Heart right ventricle (tissue), 16 donors: ENCODE measurements at regions of chr20 and their contacts with region 1.

Region 1: DNA sequence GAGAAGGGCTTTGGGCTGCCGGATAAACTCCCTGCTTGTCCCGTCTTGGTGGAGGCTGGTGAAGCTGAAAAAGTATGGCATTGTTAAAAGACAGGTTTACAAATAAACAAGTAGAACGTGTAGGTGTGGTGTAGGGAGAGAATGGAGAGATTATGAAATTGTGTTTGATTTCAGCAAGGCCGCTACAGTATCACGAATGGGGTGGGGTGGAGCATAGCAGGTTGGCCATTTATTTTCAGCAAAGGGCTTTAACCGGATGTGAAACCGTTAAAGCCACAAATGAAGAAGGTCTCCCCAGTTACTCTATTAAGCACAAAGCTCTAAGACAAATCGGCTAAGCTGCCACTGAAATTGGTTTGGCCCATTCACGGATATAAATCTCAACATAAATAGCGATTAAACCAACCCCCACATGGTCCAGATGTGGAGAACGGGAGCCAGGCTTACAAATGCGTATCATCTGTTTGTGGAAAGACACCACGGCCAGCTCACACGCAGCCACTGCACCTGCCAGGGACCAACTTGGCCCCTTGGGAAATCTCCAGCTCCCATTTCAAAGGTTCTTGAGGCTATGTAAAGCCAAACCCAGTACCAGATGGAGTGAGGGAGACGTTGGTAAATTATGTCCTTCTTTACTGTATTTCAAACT is 94.0 kb downstream of the ZMYND8 start:
- DNase-seq: no peak
- ATAC-seq: no peak
- H3K4me3 ChIP-seq: no peak overlapping the region
- H3K27ac ChIP-seq: peak overlapping the region in 5 of 10 donors; percentile 41 to 75 (median 66)
- H3K4me1 ChIP-seq: peaks cover 8 to 48% (median 31%) of the 10 kb centered on the region in 9 donors
- H3K27me3 ChIP-seq: no peaks in the 10 kb centered on the region
- CTCF ChIP-seq: no peak

Region 2: GRCh38 chr20:47205577-47206498 is 56.7 kb before region 1 on chr20:
- intact Hi-C with region 1: loop called in 3 of 10 experiments (anchors 5 kb)
- DNase-seq: peak; percentile 38 to 76
- ATAC-seq: peak; percentile 61 to 86 (median 70)
- H3K4me3 ChIP-seq: no peak overlapping the region
- H3K27ac ChIP-seq: no peak overlapping the region
- H3K4me1 ChIP-seq: peaks cover 0 to 16% (median 0%) of the 10 kb centered on the region in 9 donors
- H3K27me3 ChIP-seq: no peaks in the 10 kb centered on the region
- CTCF ChIP-seq: peak; percentile 31 to 83 (median 67)

Region 3: DNA sequence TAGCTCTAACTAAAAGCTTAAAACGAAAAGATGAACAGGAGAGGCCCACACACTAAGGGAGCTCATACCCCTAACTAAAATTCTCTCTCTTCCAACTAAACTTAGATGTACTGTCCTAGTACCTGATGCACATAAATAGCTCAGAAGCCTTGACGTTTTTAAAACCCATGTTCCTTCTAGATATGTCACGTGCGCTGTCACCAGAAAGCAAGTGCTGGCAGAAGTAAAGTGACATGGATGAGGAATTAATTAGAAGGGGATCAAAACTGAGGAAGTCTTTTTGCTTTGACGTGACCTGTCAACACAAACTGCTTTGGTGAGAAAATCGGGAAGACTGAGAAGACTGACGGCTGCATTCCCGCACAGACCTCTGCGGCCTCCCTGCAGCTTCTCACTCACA is 48.5 kb before region 1 on chr20:
- intact Hi-C with region 1: loop called in 2 of 10 experiments (anchors 5 kb)
- DNase-seq: no peak
- ATAC-seq: peak in 7 of 8 donors; percentile 54 to 85 (median 65)
- H3K4me3 ChIP-seq: no peak overlapping the region
- H3K27ac ChIP-seq: peak overlapping the region; percentile 24 to 78 (median 64)
- H3K4me1 ChIP-seq: peaks cover 0 to 48% (median 9%) of the 10 kb centered on the region in 9 donors
- H3K27me3 ChIP-seq: no peaks in the 10 kb centered on the region
- CTCF ChIP-seq: no peak

Region 4: GRCh38 chr20:47352332-47353238 is 90.1 kb after region 1 on chr20:
- intact Hi-C with region 1: no loop called
- DNase-seq: peak; percentile 51 to 58
- ATAC-seq: peak in 7 of 8 donors; percentile 17 to 71 (median 45)
- H3K4me3 ChIP-seq: peak overlapping the region in 9 of 10 donors; percentile 13 to 38 (median 28)
- H3K27ac ChIP-seq: peak overlapping the region; percentile 97 to 99 (median 98)
- H3K4me1 ChIP-seq: peaks cover 45 to 100% (median 100%) of the 10 kb centered on the region in 9 donors
- H3K27me3 ChIP-seq: no peaks in the 10 kb centered on the region
- CTCF ChIP-seq: no peak